ENCODE measurements at regions of chr5 and their contacts with region 1.

Region 1: GRCh38 chr5:138583984-138584637 is 8.9 kb upstream of the HSPA9 start:
- H3K4me3 Mint-ChIP-seq: no peak overlapping the region
- H3K27ac Mint-ChIP-seq: no peak overlapping the region
- H3K4me1 Mint-ChIP-seq: no peaks in the 10 kb centered on the region
- H3K27me3 Mint-ChIP-seq: peaks cover 4% of the 10 kb centered on the region

Region 2: GRCh38 chr5:138536665-138537315 is 47.3 kb before region 1 on chr5:
- intact Hi-C with region 1: no loop called
- H3K4me3 Mint-ChIP-seq: no peak overlapping the region
- H3K27ac Mint-ChIP-seq: no peak overlapping the region
- H3K4me1 Mint-ChIP-seq: peaks cover 56% of the 10 kb centered on the region
- H3K27me3 Mint-ChIP-seq: no peaks in the 10 kb centered on the region

Region 3: DNA sequence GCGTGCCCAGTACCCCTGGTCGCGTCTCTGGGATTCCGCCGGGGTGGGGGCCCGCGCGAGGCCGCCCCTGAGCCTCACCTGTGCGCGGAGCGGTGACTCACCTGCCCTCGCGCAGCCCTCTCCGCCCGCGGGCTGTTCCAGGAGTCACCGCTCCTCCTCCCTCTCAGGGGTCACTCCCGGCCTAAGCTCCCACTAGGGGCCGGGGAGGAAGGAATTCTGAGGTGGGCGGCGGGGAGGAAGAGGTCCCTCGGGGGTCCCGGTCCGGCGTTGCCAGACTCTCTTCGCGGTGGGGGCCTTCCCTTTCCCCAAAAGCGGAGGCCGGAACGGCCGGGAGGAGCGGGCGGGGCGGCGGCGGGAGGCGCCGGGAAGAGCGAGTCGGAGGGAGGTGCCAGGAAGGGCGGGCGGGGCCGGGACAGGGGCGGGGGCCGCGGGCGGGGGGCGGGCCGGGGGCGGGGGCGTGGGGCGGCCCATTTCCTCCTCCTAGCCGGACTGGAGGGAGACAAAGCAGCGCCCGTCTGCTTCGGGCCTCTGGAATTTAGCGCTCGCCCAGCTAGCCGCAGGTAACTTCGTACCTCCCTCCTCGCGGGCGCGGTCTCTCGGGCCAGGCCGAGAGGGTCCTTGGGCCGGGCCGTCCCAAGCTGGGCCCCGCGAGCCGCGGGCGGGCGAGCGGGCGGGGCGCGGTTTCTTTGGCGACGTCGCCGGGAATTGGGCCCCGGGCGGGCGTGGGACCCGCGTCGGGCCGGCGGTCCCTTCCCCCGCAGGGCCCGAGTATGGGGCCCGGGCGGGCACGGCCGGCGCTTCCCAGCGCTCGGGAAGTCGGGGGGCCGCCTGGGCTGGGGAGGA is 169.1 kb after region 1 on chr5 and contains the start of gene CTNNA1:
- intact Hi-C with region 1: loop called (anchors 10 kb)
- H3K4me3 Mint-ChIP-seq: peak within 1 kb of the TSS; percentile 92
- H3K27ac Mint-ChIP-seq: peak within 1 kb of the TSS; percentile 96
- H3K4me1 Mint-ChIP-seq: peaks cover 48% of the 10 kb centered on the region
- H3K27me3 Mint-ChIP-seq: peaks cover 9% of the 10 kb centered on the region